ENCODE measurements at regions of chrX and their contacts with region 1.

Region 1: DNA sequence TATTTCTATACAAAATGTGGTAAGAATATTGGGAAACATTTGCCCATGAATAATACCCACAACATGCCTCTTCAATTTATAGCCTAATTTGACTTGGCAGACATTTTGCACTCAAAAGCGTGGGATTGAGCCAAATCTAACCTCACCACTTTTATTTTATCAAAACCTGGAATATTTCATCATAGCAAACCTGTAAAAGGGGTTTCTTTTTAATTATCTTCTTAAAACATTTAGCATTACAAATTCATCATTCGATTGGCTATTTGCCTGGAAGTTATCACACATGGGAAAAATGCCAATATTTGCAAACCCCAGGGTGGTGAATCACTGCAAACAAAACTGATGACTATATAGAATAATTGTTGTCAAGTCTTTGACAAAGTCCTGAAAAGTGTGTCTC is 56.2 kb downstream of the VCX3B start:
- DNase-seq: no peak
- H3K4me3 ChIP-seq: no peak overlapping the region
- H3K27ac ChIP-seq: no peak overlapping the region
- H3K27me3 ChIP-seq: peaks cover 0 to 16% (median 0%) of the 10 kb centered on the region in 45 donors
- CTCF ChIP-seq: no peak

Region 2: DNA sequence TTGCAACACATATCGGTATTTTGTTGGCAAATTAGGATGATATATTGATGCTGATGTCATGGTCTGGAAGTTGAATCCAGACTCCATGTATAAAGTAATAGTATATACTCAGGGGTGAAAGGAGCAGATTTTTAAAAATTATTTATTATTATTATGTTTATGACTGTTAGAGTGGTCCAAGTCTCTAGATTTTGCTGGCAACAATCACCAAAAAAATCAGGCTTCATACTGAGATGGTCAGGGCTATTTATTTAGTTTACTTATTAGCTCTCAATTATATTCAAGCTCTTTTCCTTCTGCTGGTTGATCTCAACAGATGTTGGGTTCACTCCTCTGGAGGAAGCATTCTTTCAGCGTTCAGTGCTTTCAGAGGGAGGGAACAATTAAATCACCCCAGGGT is 130.0 kb before region 1 on chrX:
- intact Hi-C with region 1: no loop called
- DNase-seq: no peak
- H3K4me3 ChIP-seq: no peak overlapping the region
- H3K27ac ChIP-seq: no peak overlapping the region
- H3K27me3 ChIP-seq: peaks cover 0 to 14% (median 0%) of the 10 kb centered on the region in 45 donors
- CTCF ChIP-seq: no peak

Region 3: GRCh38 chrX:8579602-8580001 is 58.8 kb after region 1 on chrX:
- intact Hi-C with region 1: no loop called
- DNase-seq: no peak
- H3K4me3 ChIP-seq: no peak overlapping the region
- H3K27ac ChIP-seq: no peak overlapping the region
- H3K27me3 ChIP-seq: peaks cover 0 to 35% (median 0%) of the 10 kb centered on the region in 45 donors
- CTCF ChIP-seq: no peak

Region 4: DNA sequence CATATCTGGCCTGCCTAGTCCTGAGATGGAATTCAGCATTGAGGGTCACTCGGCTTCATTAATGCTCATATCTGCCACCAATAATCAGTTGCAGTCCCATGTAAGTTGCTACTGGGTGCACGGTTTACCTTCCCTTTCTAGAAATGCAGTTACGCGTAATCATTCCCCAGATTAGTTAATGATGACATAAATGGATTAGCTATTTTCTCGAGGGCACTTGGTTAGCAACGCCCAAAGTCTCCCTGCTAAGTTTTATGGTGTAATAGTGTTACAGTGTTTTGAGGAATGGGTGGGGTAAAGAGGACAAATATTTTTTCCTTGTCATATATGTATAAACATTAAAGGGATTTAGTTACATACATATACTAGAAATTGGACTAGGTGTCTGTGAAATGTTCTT is 1980.8 kb after region 1 on chrX:
- intact Hi-C with region 1: loop called in 1 of 2 experiments (anchors 5 kb)
- DNase-seq: no peak
- H3K4me3 ChIP-seq: no peak overlapping the region
- H3K27ac ChIP-seq: no peak overlapping the region
- H3K27me3 ChIP-seq: peaks cover 0 to 58% (median 8%) of the 10 kb centered on the region in 45 donors
- CTCF ChIP-seq: no peak

Measured in dorsolateral prefrontal cortex (tissue), 120 donors.